CD4-positive, alpha-beta memory T cell (primary cell): ENCODE measurements at regions of chr13 and their contacts with region 1.

Region 1: DNA sequence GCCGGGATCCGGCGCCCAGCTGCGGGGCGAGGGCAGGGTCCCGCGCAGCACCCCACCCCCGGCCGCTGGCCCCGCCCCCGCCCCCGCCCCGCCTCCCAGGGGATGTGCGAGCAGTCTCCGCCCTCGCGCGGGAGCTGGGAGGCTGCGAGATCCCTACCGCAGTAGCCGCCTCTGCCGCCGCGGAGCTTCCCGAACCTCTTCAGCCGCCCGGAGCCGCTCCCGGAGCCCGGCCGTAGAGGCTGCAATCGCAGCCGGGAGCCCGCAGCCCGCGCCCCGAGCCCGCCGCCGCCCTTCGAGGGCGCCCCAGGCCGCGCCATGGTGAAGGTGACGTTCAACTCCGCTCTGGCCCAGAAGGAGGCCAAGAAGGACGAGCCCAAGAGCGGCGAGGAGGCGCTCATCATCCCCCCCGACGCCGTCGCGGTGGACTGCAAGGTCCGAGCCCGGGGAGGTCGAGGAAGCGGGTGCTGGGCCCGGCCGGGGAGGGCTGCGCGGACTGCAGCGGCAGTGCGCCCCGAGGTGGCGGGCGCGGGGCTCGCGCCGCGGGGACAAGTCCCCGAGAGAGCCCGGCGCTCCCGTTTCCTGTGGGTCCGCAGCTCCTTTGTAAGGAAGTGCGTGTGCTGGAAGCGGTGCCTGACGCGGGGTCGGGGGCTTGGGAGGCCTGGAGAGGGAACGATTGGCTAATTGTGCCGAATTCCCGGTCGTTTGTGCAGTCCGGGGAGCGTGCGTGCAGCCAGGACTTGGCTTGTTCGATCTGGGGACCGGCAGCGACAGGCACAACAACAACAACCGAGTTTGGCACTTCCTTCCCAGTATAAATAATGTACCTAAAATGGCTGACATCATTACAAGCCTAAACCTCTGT is at the start of gene ITM2B:
- DNase-seq: peak; percentile 72 to 79 (median 76)
- H3K4me3 ChIP-seq: peak within 1 kb of the TSS; percentile 68 to 92
- H3K4me3 Mint-ChIP-seq: peak within 1 kb of the TSS; percentile 95 to 99 (median 98)
- H3K27ac ChIP-seq: peak within 1 kb of the TSS; percentile 98
- H3K27ac Mint-ChIP-seq: peak within 1 kb of the TSS; percentile 93 to 99 (median 98)
- H3K4me1 ChIP-seq: peaks cover 45% of the 10 kb centered on the region
- H3K4me1 Mint-ChIP-seq: peaks cover 37 to 69% (median 46%) of the 10 kb centered on the region in 4 donors
- H3K27me3 ChIP-seq: no peaks in the 10 kb centered on the region
- H3K27me3 Mint-ChIP-seq: no peaks in the 10 kb centered on the region
- total RNA-seq, gene ITM2B: 653 to 670 TPM

Region 2: DNA sequence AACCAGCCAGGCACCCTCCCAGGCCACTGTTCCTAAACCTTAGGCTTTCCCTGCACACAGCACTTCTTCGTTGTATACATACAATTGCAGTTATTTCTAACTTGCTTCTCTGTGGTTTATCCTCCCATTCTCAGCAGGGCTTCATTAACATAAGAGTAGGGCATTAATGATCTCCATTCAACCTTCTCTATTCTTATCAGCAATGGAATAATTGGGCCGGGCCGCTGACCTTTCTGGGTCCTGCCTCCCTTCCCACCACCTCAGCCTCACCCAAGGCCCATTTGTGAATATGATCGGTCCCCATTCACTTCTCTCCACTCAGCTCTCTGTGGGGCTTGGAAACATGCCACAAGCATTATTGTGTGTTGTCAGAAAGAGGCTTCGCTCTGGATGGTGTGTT is 416.4 kb before region 1 on chr13:
- CTCF ChIA-PET with region 1: no interaction called
- POLR2A ChIA-PET with region 1: no interaction called
- intact Hi-C with region 1: no loop called
- DNase-seq: no peak
- H3K4me3 ChIP-seq: no peak overlapping the region
- H3K4me3 Mint-ChIP-seq: no peak overlapping the region
- H3K27ac ChIP-seq: no peak overlapping the region
- H3K27ac Mint-ChIP-seq: no peak overlapping the region
- H3K4me1 ChIP-seq: no peaks in the 10 kb centered on the region
- H3K4me1 Mint-ChIP-seq: no peaks in the 10 kb centered on the region
- H3K27me3 ChIP-seq: no peaks in the 10 kb centered on the region
- H3K27me3 Mint-ChIP-seq: peaks cover 0 to 1% of the 10 kb centered on the region in 2 donors

Region 3: GRCh38 chr13:48094781-48095502 is 138.3 kb before region 1 on chr13 and contains the start of gene MED4:
- CTCF ChIA-PET with region 1: interaction called, 10 read pairs
- POLR2A ChIA-PET with region 1: interaction called, 16 read pairs
- intact Hi-C with region 1: loop called (anchors 1 kb)
- DNase-seq: peak; percentile 95 to 98 (median 97)
- H3K4me3 ChIP-seq: peak within 1 kb of the TSS; percentile 73 to 76
- H3K4me3 Mint-ChIP-seq: peak within 1 kb of the TSS; percentile 93 to 98 (median 96)
- H3K27ac ChIP-seq: peak within 1 kb of the TSS; percentile 96
- H3K27ac Mint-ChIP-seq: peak within 1 kb of the TSS; percentile 92 to 99 (median 98)
- H3K4me1 ChIP-seq: peaks cover 37% of the 10 kb centered on the region
- H3K4me1 Mint-ChIP-seq: peaks cover 24 to 54% (median 35%) of the 10 kb centered on the region in 4 donors
- H3K27me3 ChIP-seq: no peaks in the 10 kb centered on the region
- H3K27me3 Mint-ChIP-seq: peaks cover 0 to 2% of the 10 kb centered on the region in 2 donors
- total RNA-seq, gene MED4: 50.6 to 53.5 TPM

Region 4: GRCh38 chr13:48184260-48184659 is 49.0 kb before region 1 on chr13:
- CTCF ChIA-PET with region 1: interaction called, 11 read pairs
- POLR2A ChIA-PET with region 1: interaction called, 55 read pairs
- intact Hi-C with region 1: loop called (anchors 1 kb)
- DNase-seq: no peak
- H3K4me3 ChIP-seq: no peak overlapping the region
- H3K4me3 Mint-ChIP-seq: peak overlapping the region; percentile 2 to 87 (median 39)
- H3K27ac ChIP-seq: no peak overlapping the region
- H3K27ac Mint-ChIP-seq: peak overlapping the region; percentile 74 to 96 (median 80)
- H3K4me1 ChIP-seq: peaks cover 69% of the 10 kb centered on the region
- H3K4me1 Mint-ChIP-seq: peaks cover 45 to 67% (median 56%) of the 10 kb centered on the region in 4 donors
- H3K27me3 ChIP-seq: no peaks in the 10 kb centered on the region
- H3K27me3 Mint-ChIP-seq: no peaks in the 10 kb centered on the region

Region 5: GRCh38 chr13:48251611-48252081 is 18.4 kb after region 1 on chr13:
- CTCF ChIA-PET with region 1: interaction called, 6 read pairs
- POLR2A ChIA-PET with region 1: interaction called, 19 read pairs
- intact Hi-C with region 1: no loop called
- DNase-seq: no peak
- H3K4me3 ChIP-seq: no peak overlapping the region
- H3K4me3 Mint-ChIP-seq: peak overlapping the region in 6 of 8 donors; percentile 8 to 57 (median 26)
- H3K27ac ChIP-seq: no peak overlapping the region
- H3K27ac Mint-ChIP-seq: peak overlapping the region in 6 of 7 donors; percentile 4 to 45 (median 29)
- H3K4me1 ChIP-seq: peaks cover 65% of the 10 kb centered on the region
- H3K4me1 Mint-ChIP-seq: peaks cover 43 to 80% (median 62%) of the 10 kb centered on the region in 4 donors
- H3K27me3 ChIP-seq: no peaks in the 10 kb centered on the region
- H3K27me3 Mint-ChIP-seq: no peaks in the 10 kb centered on the region

Region 6: GRCh38 chr13:48580185-48580803 is 347.0 kb after region 1 on chr13:
- CTCF ChIA-PET with region 1: interaction called, 4 read pairs
- POLR2A ChIA-PET with region 1: no interaction called
- intact Hi-C with region 1: loop called (anchors 2 kb)
- DNase-seq: peak; percentile 64 to 74 (median 70)
- H3K4me3 ChIP-seq: no peak overlapping the region
- H3K4me3 Mint-ChIP-seq: peak overlapping the region in 1 of 8 donors; percentile 31
- H3K27ac ChIP-seq: no peak overlapping the region
- H3K27ac Mint-ChIP-seq: peak overlapping the region in 2 of 7 donors; percentile 0 to 43
- H3K4me1 ChIP-seq: peaks cover 19% of the 10 kb centered on the region
- H3K4me1 Mint-ChIP-seq: peaks cover 4 to 28% (median 13%) of the 10 kb centered on the region in 4 donors
- H3K27me3 ChIP-seq: no peaks in the 10 kb centered on the region
- H3K27me3 Mint-ChIP-seq: peaks cover 0 to 4% of the 10 kb centered on the region in 2 donors